IMR-90 (cell line): ENCODE measurements at regions of chr9 and their contacts with region 1.

Region 1: DNA sequence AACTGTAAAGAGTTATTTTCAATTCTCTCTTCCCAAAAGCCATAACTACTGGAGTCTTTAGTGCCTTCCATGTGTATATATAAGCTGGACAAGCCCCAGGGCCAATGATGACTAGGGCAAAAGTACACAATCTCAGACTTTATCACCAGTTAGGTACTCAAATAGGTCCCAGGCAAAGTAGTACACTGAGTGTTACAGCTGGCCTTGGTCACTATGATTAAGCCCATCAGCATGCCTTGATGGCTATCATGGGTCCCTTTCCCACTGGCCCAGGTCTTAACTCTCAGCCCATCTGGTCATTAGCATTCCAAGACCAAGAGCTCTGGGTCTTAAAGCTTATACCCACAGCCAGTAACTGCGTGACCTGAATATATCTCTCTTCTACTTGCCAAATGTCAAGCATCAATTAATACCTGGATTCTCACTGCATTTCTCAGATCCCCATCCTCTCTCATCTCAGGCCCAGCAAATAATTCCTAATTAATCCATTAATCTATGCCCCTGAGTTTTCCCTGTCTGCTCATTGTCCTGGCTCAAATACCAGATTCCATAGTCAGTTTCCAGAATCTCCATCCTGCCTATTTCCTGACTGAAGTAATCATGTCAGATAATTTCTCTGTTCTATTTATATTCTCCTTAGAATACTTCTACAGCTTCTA is 62.3 kb downstream of the NR6A1 start:
- DNase-seq: peak; percentile 85
- ATAC-seq: peak; percentile 51
- H3K4me3 ChIP-seq: no peak overlapping the region
- H3K27ac ChIP-seq: no peak overlapping the region
- H3K4me1 ChIP-seq: peaks cover 14% of the 10 kb centered on the region
- H3K27me3 ChIP-seq: no peaks in the 10 kb centered on the region
- CTCF ChIP-seq: no peak
- POLR2A ChIP-seq: no peak
- RAD21 ChIP-seq: no peak

Region 2: DNA sequence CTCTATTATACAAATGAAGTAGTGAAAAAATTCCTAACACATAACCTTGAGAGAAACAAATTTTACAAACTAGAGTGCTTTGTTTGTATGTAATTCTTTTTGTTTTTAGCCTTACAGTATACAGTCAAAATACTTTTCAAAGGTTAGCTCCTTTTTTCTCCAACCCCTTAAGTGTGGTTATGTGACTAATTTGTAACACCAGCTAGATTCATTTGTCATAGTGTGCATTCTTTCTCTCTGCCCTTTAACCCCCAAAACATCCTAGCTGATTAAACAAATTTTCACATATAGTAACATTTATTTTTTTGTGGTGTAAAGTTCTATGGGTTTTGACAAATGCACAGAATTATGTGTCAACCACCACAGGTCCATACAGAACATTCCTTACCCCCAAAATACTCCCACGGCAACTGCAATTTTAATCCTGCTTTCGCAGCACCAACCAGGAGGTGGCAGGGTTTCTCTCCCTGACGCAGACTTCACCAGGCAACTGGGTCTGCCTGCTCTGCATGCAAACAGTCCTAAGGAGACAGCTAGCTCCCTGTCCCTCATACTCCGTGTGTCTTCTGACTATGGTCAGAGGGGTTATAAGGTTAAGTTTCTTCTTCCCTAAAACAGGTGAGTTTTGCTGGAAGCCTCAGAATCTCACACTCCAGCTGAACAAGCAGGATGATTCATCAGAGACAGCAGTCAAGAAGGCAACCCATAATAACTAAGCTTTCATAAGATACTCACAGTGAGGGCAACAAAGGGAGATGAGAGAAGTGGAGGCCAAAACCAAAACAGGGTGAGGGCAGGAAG is 157.1 kb before region 1 on chr9:
- CTCF ChIA-PET with region 1: interaction called, 23 read pairs
- POLR2A ChIA-PET with region 1: no interaction called
- dilution Hi-C with region 1: no loop called
- in situ Hi-C with region 1: loop called (anchors 5 kb)
- intact Hi-C with region 1: loop called (anchors 1 kb)
- DNase-seq: peak; percentile 73
- ATAC-seq: peak; percentile 90
- H3K4me3 ChIP-seq: no peak overlapping the region
- H3K27ac ChIP-seq: no peak overlapping the region
- H3K4me1 ChIP-seq: peaks cover 19% of the 10 kb centered on the region
- H3K27me3 ChIP-seq: peaks cover 5% of the 10 kb centered on the region; the same call in 1 of the 2 replicates
- CTCF ChIP-seq: peak; percentile 83
- POLR2A ChIP-seq: no peak
- RAD21 ChIP-seq: peak; percentile 79

Region 3: GRCh38 chr9:124658165-124659017 is 50.4 kb before region 1 on chr9:
- CTCF ChIA-PET with region 1: interaction called, 8 read pairs
- POLR2A ChIA-PET with region 1: interaction called, 3 read pairs
- dilution Hi-C with region 1: no loop called
- in situ Hi-C with region 1: no loop called
- intact Hi-C with region 1: loop called (anchors 2 kb)
- DNase-seq: peak; percentile 97
- ATAC-seq: peak; percentile 86
- H3K4me3 ChIP-seq: peak overlapping the region; percentile 57
- H3K27ac ChIP-seq: peak overlapping the region; percentile 95
- H3K4me1 ChIP-seq: peaks cover 11% of the 10 kb centered on the region
- H3K27me3 ChIP-seq: no peaks in the 10 kb centered on the region
- CTCF ChIP-seq: no peak
- POLR2A ChIP-seq: peak; percentile 99
- RAD21 ChIP-seq: no peak

Region 4: DNA sequence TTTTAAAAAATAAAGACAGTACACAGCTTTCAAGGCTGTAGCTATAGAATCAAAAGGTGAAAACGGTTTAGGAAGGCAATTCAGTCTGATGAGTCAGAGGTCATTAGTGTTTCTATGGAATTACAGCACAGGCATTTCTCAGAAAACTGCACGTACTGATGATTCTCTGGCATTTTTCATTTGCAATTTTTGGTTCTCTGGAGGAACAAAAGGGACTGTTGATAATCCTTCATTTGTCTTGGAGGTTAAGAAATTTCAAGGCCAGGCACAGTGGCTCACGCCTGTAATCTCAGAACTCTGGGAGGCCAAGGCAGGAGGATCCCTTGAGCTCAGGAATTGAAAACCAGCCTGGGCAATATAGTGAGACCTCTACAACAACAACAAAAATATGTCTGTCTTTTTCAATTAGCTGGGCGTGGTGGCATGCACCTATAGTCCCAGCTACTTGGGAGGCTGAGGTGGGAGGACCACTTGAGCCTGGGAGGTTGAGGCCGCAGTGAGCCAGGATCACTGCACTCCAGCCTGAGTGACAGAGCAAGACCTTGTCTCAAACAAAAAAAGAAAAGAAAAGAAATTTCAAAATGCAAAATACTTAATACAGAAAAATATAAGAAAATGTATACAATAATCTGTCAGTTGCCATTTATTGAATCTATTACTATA is 35.1 kb after region 1 on chr9:
- CTCF ChIA-PET with region 1: no interaction called
- POLR2A ChIA-PET with region 1: no interaction called
- dilution Hi-C with region 1: no loop called
- in situ Hi-C with region 1: no loop called
- intact Hi-C with region 1: no loop called
- DNase-seq: peak; percentile 58
- ATAC-seq: peak; percentile 46
- H3K4me3 ChIP-seq: no peak overlapping the region
- H3K27ac ChIP-seq: 0 out of 2 replicates have a peak overlapping the region, but pooled peaks have one; percentile 23
- H3K4me1 ChIP-seq: peaks cover 4% of the 10 kb centered on the region; the same call in 1 of the 2 replicates
- H3K27me3 ChIP-seq: no peaks in the 10 kb centered on the region
- CTCF ChIP-seq: no peak
- POLR2A ChIP-seq: no peak
- RAD21 ChIP-seq: no peak

Region 5: GRCh38 chr9:124764774-124765438 is 56.1 kb after region 1 on chr9:
- CTCF ChIA-PET with region 1: interaction called, 6 read pairs
- POLR2A ChIA-PET with region 1: no interaction called
- dilution Hi-C with region 1: no loop called
- in situ Hi-C with region 1: no loop called
- intact Hi-C with region 1: loop called (anchors 2 kb)
- DNase-seq: no peak
- ATAC-seq: peak; percentile 37
- H3K4me3 ChIP-seq: no peak overlapping the region
- H3K27ac ChIP-seq: no peak overlapping the region
- H3K4me1 ChIP-seq: no peaks in the 10 kb centered on the region
- H3K27me3 ChIP-seq: peaks cover 75% of the 10 kb centered on the region
- CTCF ChIP-seq: peak; percentile 40
- POLR2A ChIP-seq: no peak
- RAD21 ChIP-seq: peak; percentile 42

Region 6: DNA sequence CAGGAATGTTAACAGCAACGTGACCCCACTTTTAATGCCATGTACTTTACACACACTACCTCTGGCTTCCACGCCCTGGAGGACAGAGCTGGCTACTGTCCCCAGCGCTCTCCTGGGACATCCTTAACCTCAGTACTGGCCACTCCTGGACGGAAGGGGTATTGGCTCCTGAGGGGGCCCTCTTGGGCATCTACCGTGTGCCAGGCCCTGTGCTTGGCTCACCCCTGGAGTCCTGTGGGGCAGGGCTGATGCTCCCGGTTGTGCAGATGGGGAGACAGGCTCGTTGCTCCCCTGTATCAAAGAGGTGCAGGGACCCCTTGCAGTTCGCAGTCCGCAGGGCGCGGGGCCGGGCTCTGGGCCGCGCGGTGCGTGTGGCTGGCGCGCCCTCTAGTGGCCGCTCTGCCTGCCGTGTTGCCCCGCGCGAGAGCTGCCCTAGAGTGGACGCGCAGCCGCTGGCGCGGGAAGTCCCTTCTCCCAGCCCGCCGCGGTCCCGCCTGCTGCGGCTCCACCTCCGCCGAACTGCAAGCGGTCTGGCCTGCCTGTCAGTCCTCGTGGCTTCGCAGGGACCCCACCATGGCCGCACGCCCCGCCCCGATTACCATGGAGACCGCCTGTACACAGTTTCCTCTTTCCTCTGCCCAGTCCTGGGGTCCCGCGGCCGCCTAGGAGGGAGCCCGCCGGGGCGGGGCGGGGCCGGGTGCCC is 144.2 kb after region 1 on chr9 and contains the start of gene WDR38:
- CTCF ChIA-PET with region 1: no interaction called
- POLR2A ChIA-PET with region 1: no interaction called
- dilution Hi-C with region 1: no loop called
- in situ Hi-C with region 1: no loop called
- intact Hi-C with region 1: loop called (anchors 5 kb)
- DNase-seq: peak; percentile 66
- ATAC-seq: peak; percentile 88
- H3K4me3 ChIP-seq: peak within 1 kb of the TSS; percentile 43
- H3K27ac ChIP-seq: no peak within 1 kb of the TSS; the same call in 1 of the 2 replicates
- H3K4me1 ChIP-seq: no peaks in the 10 kb centered on the region
- H3K27me3 ChIP-seq: no peaks in the 10 kb centered on the region
- CTCF ChIP-seq: peak; percentile 84
- POLR2A ChIP-seq: peak; percentile 55; the same call in 1 of the 2 replicates
- RAD21 ChIP-seq: peak; percentile 87
- total RNA-seq, gene WDR38: not detected in 2 replicates